H1 (cell line): ENCODE measurements at regions of chr15 and their contacts with region 1.

Region 1: GRCh38 chr15:32936283-32936918 is 218.6 kb downstream of the GREM1 start:
- DNase-seq: no peak
- H3K4me3 ChIP-seq: no peak overlapping the region
- H3K27ac ChIP-seq: no peak overlapping the region
- H3K4me1 ChIP-seq: no peaks in the 10 kb centered on the region
- H3K27me3 ChIP-seq: no peaks in the 10 kb centered on the region
- CTCF ChIP-seq: peak in 2 of 3 experiments; percentile 20 to 41; a peak in 2 of 4 replicates
- EP300 ChIP-seq: no peak
- POLR2A ChIP-seq: no peak
- RAD21 ChIP-seq: peak; percentile 31 to 54; a peak in 2 of 4 replicates

Region 2: DNA sequence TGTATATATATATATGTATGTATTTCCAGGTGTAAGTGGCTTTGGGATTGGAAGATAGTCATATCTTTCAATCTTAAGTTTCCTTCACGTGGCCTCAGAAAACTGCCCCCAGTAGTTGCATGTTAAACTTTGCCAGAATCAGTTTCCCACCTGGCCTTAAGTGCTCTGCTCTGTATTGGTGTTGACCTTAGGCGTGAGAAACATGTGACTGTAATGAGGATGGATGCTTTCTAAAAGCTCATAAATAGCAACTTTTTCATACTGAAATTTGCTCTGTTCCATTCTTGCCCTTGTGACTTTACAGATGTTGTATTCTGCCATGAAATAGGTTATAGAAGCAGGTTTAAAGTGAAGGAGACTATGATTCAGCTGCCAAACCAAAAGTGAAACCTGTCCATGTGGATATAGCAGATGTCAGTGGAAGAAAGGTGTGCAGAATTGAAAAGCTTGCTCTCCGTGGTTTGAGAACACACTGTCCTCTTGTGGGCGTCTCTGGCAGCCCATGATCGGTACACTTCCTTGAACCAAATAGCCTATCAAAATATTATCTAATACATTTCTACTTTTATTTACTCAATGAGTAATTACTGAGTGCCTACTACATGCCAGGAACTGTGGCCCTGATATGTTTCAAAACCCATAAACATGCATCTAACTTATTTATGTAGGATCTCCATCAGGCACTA is 279.1 kb before region 1 on chr15:
- CTCF ChIA-PET with region 1: interaction called, 12 read pairs
- POLR2A ChIA-PET with region 1: no interaction called
- DNase-seq: peak in 1 of 2 experiments; percentile 13
- H3K4me3 ChIP-seq: no peak overlapping the region
- H3K27ac ChIP-seq: no peak overlapping the region
- H3K4me1 ChIP-seq: peaks cover 0 to 7% (median 0%) of the 10 kb centered on the region in 4 experiments; a peak in 4 of 7 replicates
- H3K27me3 ChIP-seq: no peaks in the 10 kb centered on the region; a peak in 1 of 7 replicates
- CTCF ChIP-seq: no peak
- EP300 ChIP-seq: no peak
- POLR2A ChIP-seq: no peak
- RAD21 ChIP-seq: no peak

Region 3: GRCh38 chr15:32838820-32839219 is 97.6 kb before region 1 on chr15:
- CTCF ChIA-PET with region 1: interaction called, 19 read pairs
- POLR2A ChIA-PET with region 1: no interaction called
- DNase-seq: no peak
- H3K4me3 ChIP-seq: no peak overlapping the region
- H3K27ac ChIP-seq: no peak overlapping the region
- H3K4me1 ChIP-seq: peaks cover 0 to 4% (median 0%) of the 10 kb centered on the region in 4 experiments; a peak in 2 of 7 replicates
- H3K27me3 ChIP-seq: no peaks in the 10 kb centered on the region
- CTCF ChIP-seq: no peak
- EP300 ChIP-seq: no peak
- POLR2A ChIP-seq: no peak
- RAD21 ChIP-seq: no peak

Region 4: DNA sequence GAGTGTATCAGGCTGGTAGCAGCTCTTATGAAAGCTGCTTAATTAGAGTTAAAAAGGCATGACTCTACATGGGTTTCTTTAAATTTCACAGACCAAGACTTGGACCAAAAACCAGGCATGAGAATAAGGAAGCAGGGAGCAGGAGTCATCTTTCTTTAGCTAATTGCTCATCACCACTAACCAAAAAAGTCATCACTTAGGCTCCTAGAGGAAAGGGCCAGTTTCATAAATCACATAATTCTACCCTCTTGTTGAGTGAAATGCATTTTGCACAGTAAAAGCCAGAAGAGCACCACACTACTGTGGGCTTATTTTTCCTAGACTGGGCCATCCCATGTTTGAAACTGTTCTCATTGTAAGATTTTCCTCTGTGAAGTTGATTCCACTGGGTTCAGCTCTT is 43.0 kb before region 1 on chr15:
- CTCF ChIA-PET with region 1: interaction called, 12 read pairs
- POLR2A ChIA-PET with region 1: no interaction called
- DNase-seq: no peak
- H3K4me3 ChIP-seq: no peak overlapping the region
- H3K27ac ChIP-seq: no peak overlapping the region
- H3K4me1 ChIP-seq: peaks cover 0 to 3% (median 0%) of the 10 kb centered on the region in 4 experiments; a peak in 3 of 7 replicates
- H3K27me3 ChIP-seq: no peaks in the 10 kb centered on the region; a peak in 1 of 7 replicates
- CTCF ChIP-seq: no peak
- EP300 ChIP-seq: no peak
- POLR2A ChIP-seq: no peak
- RAD21 ChIP-seq: no peak

Region 5: GRCh38 chr15:32908135-32908801 is 28.1 kb before region 1 on chr15:
- CTCF ChIA-PET with region 1: interaction called, 14 read pairs
- POLR2A ChIA-PET with region 1: no interaction called
- DNase-seq: no peak
- H3K4me3 ChIP-seq: no peak overlapping the region
- H3K27ac ChIP-seq: no peak overlapping the region
- H3K4me1 ChIP-seq: peaks cover 0 to 4% (median 0%) of the 10 kb centered on the region in 4 experiments; a peak in 2 of 7 replicates
- H3K27me3 ChIP-seq: no peaks in the 10 kb centered on the region
- CTCF ChIP-seq: no peak
- EP300 ChIP-seq: no peak
- POLR2A ChIP-seq: no peak
- RAD21 ChIP-seq: no peak

Region 6: GRCh38 chr15:32919749-32920414 is 16.5 kb before region 1 on chr15:
- CTCF ChIA-PET with region 1: interaction called, 10 read pairs
- POLR2A ChIA-PET with region 1: interaction called, 4 read pairs
- DNase-seq: no peak
- H3K4me3 ChIP-seq: no peak overlapping the region
- H3K27ac ChIP-seq: no peak overlapping the region
- H3K4me1 ChIP-seq: peaks cover 0 to 6% (median 4%) of the 10 kb centered on the region in 4 experiments; a peak in 2 of 7 replicates
- H3K27me3 ChIP-seq: no peaks in the 10 kb centered on the region
- CTCF ChIP-seq: no peak
- EP300 ChIP-seq: no peak
- POLR2A ChIP-seq: no peak
- RAD21 ChIP-seq: no peak

Region 7: GRCh38 chr15:32956006-32956405 is 19.6 kb after region 1 on chr15:
- CTCF ChIA-PET with region 1: interaction called, 11 read pairs
- POLR2A ChIA-PET with region 1: no interaction called
- DNase-seq: no peak
- H3K4me3 ChIP-seq: no peak overlapping the region
- H3K27ac ChIP-seq: no peak overlapping the region
- H3K4me1 ChIP-seq: peaks cover 7 to 17% (median 14%) of the 10 kb centered on the region in 4 experiments; a peak in 6 of 7 replicates
- H3K27me3 ChIP-seq: no peaks in the 10 kb centered on the region
- CTCF ChIP-seq: peak in 2 of 3 experiments; percentile 65 to 74; a peak in 3 of 4 replicates
- EP300 ChIP-seq: no peak
- POLR2A ChIP-seq: no peak
- RAD21 ChIP-seq: peak; percentile 70 to 88